ENCODE measurements at regions of chr3 and their contacts with region 1.

Region 1: DNA sequence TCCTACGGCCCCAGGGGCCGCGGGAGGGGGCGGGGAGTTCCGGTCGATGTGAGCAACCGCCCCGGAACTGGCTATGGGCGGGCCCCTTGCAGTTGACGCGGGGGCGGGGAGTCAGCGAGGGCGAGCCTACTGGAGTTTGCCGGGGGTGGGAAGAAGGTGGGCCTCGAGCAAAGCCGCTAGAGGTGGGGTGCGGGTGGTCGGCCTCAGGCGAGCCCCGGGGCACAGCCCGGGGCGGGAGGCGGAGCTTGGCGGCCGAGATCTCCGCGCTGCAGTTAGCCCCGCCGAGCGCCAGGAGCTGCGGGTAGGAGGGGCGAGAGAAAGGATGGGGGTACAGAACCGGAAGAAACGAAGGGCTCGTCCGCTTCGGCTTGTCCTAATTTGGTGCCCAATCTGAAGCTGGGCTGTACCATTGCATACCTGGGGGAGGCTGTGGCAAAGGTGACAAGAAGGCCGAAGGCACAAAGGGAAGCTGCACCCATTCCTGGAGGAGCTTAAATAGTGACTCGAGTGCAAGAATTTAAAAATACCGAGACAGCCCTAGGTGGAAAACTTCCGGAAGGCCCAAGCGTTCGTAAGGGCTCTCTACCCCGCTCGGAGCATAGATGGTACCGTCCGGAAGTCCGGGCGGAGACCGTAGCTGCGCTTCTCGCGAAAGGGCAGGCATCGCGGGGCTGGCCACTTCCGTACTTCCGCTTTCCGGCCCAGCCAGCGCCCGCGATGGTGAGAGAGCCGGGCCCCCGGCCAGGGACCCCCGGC is at the starts of genes ARPC4 and TADA3:
- DNase-seq: peak; percentile 87 to 96 (median 95)
- H3K4me3 ChIP-seq: peak within 1 kb of the TSS; percentile 88
- H3K4me3 Mint-ChIP-seq: peak within 1 kb of the TSS; percentile 95 to 99 (median 97)
- H3K27ac ChIP-seq: peak within 1 kb of the TSS; percentile 97
- H3K27ac Mint-ChIP-seq: peak within 1 kb of the TSS; percentile 90 to 100 (median 99)
- H3K4me1 ChIP-seq: peaks cover 56% of the 10 kb centered on the region
- H3K4me1 Mint-ChIP-seq: peaks cover 54 to 78% (median 66%) of the 10 kb centered on the region in 3 donors
- H3K27me3 ChIP-seq: no peaks in the 10 kb centered on the region
- H3K27me3 Mint-ChIP-seq: peaks cover 0 to 1% of the 10 kb centered on the region in 2 donors
- total RNA-seq, gene ARPC4: 309 to 319 TPM
- total RNA-seq, gene TADA3: 57.0 to 58.8 TPM

Region 2: DNA sequence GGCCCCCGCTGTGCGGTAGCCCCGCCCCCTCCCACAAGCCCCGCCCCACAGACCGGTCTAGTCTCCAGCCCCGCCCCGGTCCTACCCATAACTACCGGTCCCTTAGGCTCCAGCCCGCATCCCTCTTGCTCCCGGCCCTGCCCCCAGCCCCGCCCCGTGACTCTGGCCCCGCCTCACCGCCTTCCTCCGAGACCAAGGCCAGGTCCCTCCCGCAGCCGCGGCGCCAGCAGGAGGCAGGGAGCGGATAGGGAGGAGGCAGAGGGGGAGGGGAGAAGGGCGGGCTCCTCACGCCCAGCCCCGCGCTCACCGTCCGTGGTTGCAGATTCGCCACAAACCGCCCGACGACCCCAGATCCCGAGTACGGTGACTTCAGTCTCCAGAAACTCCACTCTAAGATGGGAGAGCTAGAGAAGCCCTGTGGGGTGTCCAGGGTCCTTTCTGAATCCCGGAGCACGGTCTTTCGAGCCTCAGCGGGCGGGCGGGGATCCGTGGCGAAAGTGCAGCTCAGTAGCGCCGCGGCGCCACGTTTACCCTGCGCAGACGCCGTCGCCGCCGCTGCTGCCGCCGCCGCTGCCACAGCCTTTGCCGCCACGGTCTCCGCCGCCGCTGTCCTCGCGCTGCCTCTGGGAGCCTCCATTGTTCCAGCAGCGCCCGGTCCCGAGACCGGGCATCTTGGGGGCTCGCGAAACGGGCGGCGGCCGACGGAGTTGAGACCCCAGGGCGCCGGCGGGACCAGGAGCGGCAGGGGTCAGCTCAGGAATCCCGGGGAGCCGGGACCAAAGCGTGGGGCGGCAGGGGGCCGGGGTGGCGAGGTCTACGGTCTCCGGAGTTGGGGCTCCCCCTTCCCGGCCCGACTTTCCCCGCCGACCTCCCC is 61.1 kb before region 1 on chr3 and contains the start of gene BRPF1:
- CTCF ChIA-PET with region 1: interaction called, 5 read pairs
- POLR2A ChIA-PET with region 1: interaction called, 28 read pairs
- DNase-seq: peak; percentile 96 to 100 (median 99)
- H3K4me3 ChIP-seq: peak within 1 kb of the TSS; percentile 80
- H3K4me3 Mint-ChIP-seq: peak within 1 kb of the TSS; percentile 87 to 98 (median 95)
- H3K27ac ChIP-seq: peak within 1 kb of the TSS; percentile 85
- H3K27ac Mint-ChIP-seq: peak within 1 kb of the TSS; percentile 80 to 99 (median 97)
- H3K4me1 ChIP-seq: peaks cover 42% of the 10 kb centered on the region
- H3K4me1 Mint-ChIP-seq: peaks cover 51 to 71% (median 65%) of the 10 kb centered on the region in 3 donors
- H3K27me3 ChIP-seq: no peaks in the 10 kb centered on the region
- H3K27me3 Mint-ChIP-seq: no peaks in the 10 kb centered on the region
- total RNA-seq, gene BRPF1: 46.8 to 50.2 TPM

Region 3: GRCh38 chr3:9749645-9750555 is 42.7 kb before region 1 on chr3 and contains the start of gene OGG1:
- CTCF ChIA-PET with region 1: interaction called, 8 read pairs
- POLR2A ChIA-PET with region 1: interaction called, 17 read pairs
- DNase-seq: peak; percentile 93 to 97 (median 96)
- H3K4me3 ChIP-seq: peak within 1 kb of the TSS; percentile 95
- H3K4me3 Mint-ChIP-seq: peak within 1 kb of the TSS; percentile 91 to 97 (median 94)
- H3K27ac ChIP-seq: peak within 1 kb of the TSS; percentile 76
- H3K27ac Mint-ChIP-seq: peak within 1 kb of the TSS; percentile 83 to 98 (median 92)
- H3K4me1 ChIP-seq: peaks cover 30% of the 10 kb centered on the region
- H3K4me1 Mint-ChIP-seq: peaks cover 39 to 54% (median 46%) of the 10 kb centered on the region in 3 donors
- H3K27me3 ChIP-seq: no peaks in the 10 kb centered on the region
- H3K27me3 Mint-ChIP-seq: peaks cover 0 to 4% of the 10 kb centered on the region in 2 donors
- total RNA-seq, gene OGG1: 30.5 to 32.1 TPM

Region 4: GRCh38 chr3:9809615-9810432 is 17.2 kb after region 1 on chr3 and contains the start of gene TTLL3:
- CTCF ChIA-PET with region 1: interaction called, 5 read pairs
- POLR2A ChIA-PET with region 1: interaction called, 37 read pairs
- DNase-seq: peak; percentile 29 to 66 (median 40)
- H3K4me3 ChIP-seq: peak within 1 kb of the TSS; percentile 63
- H3K4me3 Mint-ChIP-seq: peak within 1 kb of the TSS; percentile 87 to 98 (median 92)
- H3K27ac ChIP-seq: peak within 1 kb of the TSS; percentile 71
- H3K27ac Mint-ChIP-seq: peak within 1 kb of the TSS; percentile 90 to 100 (median 98)
- H3K4me1 ChIP-seq: peaks cover 28% of the 10 kb centered on the region
- H3K4me1 Mint-ChIP-seq: peaks cover 36 to 46% (median 46%) of the 10 kb centered on the region in 3 donors
- H3K27me3 ChIP-seq: no peaks in the 10 kb centered on the region
- H3K27me3 Mint-ChIP-seq: no peaks in the 10 kb centered on the region
- total RNA-seq, gene TTLL3: 18.8 to 19.1 TPM

Measured in CD8-positive, alpha-beta memory T cell (primary cell).